Psoas muscle (tissue), 8 donors: ENCODE measurements at regions of chr17 and their contacts with region 1.

Region 1: GRCh38 chr17:15260376-15261257 is 4.5 kb downstream of the PMP22 start:
- DNase-seq: peak; percentile 92 to 95
- ATAC-seq: peak; percentile 54 to 69 (median 62)
- H3K4me3 ChIP-seq: peak overlapping the region; percentile 81
- H3K27ac ChIP-seq: peak overlapping the region; percentile 95
- H3K4me1 ChIP-seq: peaks cover 70% of the 10 kb centered on the region
- H3K27me3 ChIP-seq: no peaks in the 10 kb centered on the region
- CTCF ChIP-seq: peak; percentile 92

Region 2: GRCh38 chr17:15180121-15180561 is 80.5 kb before region 1 on chr17:
- intact Hi-C with region 1: no loop called
- DNase-seq: no peak
- ATAC-seq: no peak
- H3K4me3 ChIP-seq: no peak overlapping the region
- H3K27ac ChIP-seq: no peak overlapping the region
- H3K4me1 ChIP-seq: peaks cover 2% of the 10 kb centered on the region
- H3K27me3 ChIP-seq: no peaks in the 10 kb centered on the region
- CTCF ChIP-seq: no peak

Region 3: GRCh38 chr17:15289285-15290185 is 28.9 kb after region 1 on chr17:
- intact Hi-C with region 1: no loop called
- DNase-seq: no peak
- ATAC-seq: no peak
- H3K4me3 ChIP-seq: no peak overlapping the region
- H3K27ac ChIP-seq: no peak overlapping the region
- H3K4me1 ChIP-seq: no peaks in the 10 kb centered on the region
- H3K27me3 ChIP-seq: no peaks in the 10 kb centered on the region
- CTCF ChIP-seq: no peak

Region 4: GRCh38 chr17:15307710-15308111 is 47.1 kb after region 1 on chr17:
- intact Hi-C with region 1: loop called in 1 of 2 experiments (anchors 5 kb)
- DNase-seq: peak; percentile 15 to 59
- ATAC-seq: peak; percentile 76 to 96 (median 90)
- H3K4me3 ChIP-seq: no peak overlapping the region
- H3K27ac ChIP-seq: peak overlapping the region; percentile 43
- H3K4me1 ChIP-seq: peaks cover 8% of the 10 kb centered on the region
- H3K27me3 ChIP-seq: no peaks in the 10 kb centered on the region
- CTCF ChIP-seq: no peak

Region 5: GRCh38 chr17:15398736-15399331 is 138.2 kb after region 1 on chr17:
- intact Hi-C with region 1: loop called in 1 of 2 experiments (anchors 1 kb)
- DNase-seq: peak; percentile 70 to 83
- ATAC-seq: peak; percentile 81 to 89 (median 87)
- H3K4me3 ChIP-seq: no peak overlapping the region
- H3K27ac ChIP-seq: peak overlapping the region; percentile 71
- H3K4me1 ChIP-seq: peaks cover 21% of the 10 kb centered on the region
- H3K27me3 ChIP-seq: no peaks in the 10 kb centered on the region
- CTCF ChIP-seq: no peak

Region 6: DNA sequence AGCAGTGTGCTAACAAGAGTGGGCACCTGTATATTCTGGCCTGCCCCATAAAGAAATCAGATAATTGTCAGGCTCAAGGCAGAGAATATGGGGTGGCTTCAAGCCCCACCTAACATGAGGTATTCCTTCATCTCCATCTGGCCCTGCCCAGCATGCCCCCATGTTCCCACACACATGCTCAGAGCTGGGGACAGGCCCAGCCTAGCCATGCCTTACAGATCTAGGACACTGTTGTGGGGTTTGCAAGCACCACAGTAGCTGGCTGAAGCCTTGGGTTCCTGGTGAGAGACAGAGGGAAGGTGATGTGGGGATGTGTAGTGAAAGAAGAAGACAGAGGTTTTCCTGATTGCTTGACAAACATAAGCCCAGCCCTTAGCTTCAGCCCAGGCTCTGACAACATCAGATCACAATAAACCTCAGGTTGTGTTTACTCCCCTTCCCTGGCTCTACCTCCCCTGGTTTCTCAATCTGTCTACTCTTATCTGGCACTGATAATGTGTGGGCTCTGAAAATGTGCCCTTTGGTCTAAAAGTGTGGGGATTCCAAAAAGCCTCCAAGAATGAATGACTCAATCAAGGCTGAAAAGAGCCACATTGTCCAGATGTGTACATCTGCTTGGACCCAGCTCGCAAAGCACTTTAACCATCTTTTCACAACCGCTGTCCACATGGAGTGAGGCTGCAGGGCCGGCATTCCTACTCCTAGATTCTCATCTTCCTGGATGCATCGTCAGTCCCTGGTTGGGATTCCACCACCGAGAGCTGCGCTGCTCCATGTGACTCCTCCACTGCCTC is 172.4 kb after region 1 on chr17:
- intact Hi-C with region 1: loop called (anchors 1 to 5 kb)
- DNase-seq: no peak
- ATAC-seq: no peak
- H3K4me3 ChIP-seq: no peak overlapping the region
- H3K27ac ChIP-seq: peak overlapping the region; percentile 92
- H3K4me1 ChIP-seq: peaks cover 50% of the 10 kb centered on the region
- H3K27me3 ChIP-seq: no peaks in the 10 kb centered on the region
- CTCF ChIP-seq: no peak

Region 7: GRCh38 chr17:15502369-15503112 is 241.9 kb after region 1 on chr17:
- intact Hi-C with region 1: loop called (anchors 1 to 2 kb)
- DNase-seq: peak; percentile 92 to 96
- ATAC-seq: peak; percentile 92 to 95 (median 94)
- H3K4me3 ChIP-seq: peak overlapping the region; percentile 42
- H3K27ac ChIP-seq: peak overlapping the region; percentile 54
- H3K4me1 ChIP-seq: peaks cover 11% of the 10 kb centered on the region
- H3K27me3 ChIP-seq: no peaks in the 10 kb centered on the region
- CTCF ChIP-seq: peak; percentile 84